ENCODE measurements at regions of chr19 and their contacts with region 1.

Region 1: GRCh38 chr19:32971715-32972540 is at the starts of genes CEP89 and FAAP24:
- DNase-seq: peak; percentile 94
- ATAC-seq: peak; percentile 98
- H3K4me3 Mint-ChIP-seq: peak within 1 kb of the TSS; percentile 99
- H3K27ac Mint-ChIP-seq: peak within 1 kb of the TSS; percentile 97
- H3K4me1 Mint-ChIP-seq: peaks cover 15% of the 10 kb centered on the region
- H3K27me3 Mint-ChIP-seq: no peaks in the 10 kb centered on the region
- CTCF ChIP-seq: no peak
- total RNA-seq, gene CEP89: 16.4 and 19.4 TPM in 2 replicates
- total RNA-seq, gene FAAP24: 3.7 and 4.3 TPM in 2 replicates

Region 2: GRCh38 chr19:32405431-32406161 is 566.3 kb before region 1 on chr19 and contains the start of gene DPY19L3:
- CTCF ChIA-PET with region 1: no interaction called
- POLR2A ChIA-PET with region 1: interaction called, 5 read pairs
- intact Hi-C with region 1: loop called (anchors 5 kb)
- DNase-seq: peak; percentile 93
- ATAC-seq: peak; percentile 91
- H3K4me3 Mint-ChIP-seq: peak within 1 kb of the TSS; percentile 91
- H3K27ac Mint-ChIP-seq: peak within 1 kb of the TSS; percentile 93
- H3K4me1 Mint-ChIP-seq: peaks cover 16% of the 10 kb centered on the region
- H3K27me3 Mint-ChIP-seq: no peaks in the 10 kb centered on the region
- CTCF ChIP-seq: no peak
- total RNA-seq, gene DPY19L3: 22.1 and 29.8 TPM in 2 replicates

Region 3: DNA sequence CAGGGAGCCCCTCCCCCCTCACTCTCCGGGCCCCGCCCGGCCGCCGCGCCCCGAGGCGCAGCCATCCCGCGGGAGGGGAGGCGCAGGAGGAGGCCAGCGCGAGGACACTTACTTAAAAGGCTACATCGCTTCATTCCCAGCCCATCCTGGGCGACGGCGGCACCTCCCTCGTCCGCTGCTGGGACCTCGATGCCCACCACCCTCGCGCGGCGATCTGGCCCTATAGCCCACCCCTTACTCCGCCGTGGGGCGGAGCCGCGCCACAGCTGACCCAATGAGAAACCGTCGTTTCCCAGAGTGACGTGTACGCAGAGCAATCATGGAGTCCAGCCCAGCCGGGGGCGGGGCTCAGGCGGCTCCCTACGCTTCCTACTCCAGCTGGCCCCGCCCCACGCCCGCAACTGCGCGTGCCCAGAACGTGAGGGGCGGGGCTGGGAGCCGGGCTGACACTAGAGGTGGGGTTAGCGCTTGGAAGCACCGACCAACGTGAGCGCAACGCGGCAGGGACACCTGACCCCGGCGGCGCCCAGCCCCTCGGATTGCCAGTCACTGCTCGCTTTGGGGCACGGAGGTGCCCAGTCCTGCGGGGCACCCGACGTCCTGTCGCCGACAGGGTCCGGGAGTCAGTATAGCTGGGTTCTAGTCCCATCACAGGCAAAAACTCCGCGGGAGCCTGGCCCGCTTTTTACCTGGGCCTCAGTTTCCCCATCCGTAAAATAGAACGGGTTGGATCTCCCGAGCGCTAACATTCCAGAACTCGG is 296.8 kb before region 1 on chr19 and contains the start of gene ANKRD27:
- CTCF ChIA-PET with region 1: no interaction called
- POLR2A ChIA-PET with region 1: no interaction called
- intact Hi-C with region 1: loop called (anchors 1 kb)
- DNase-seq: peak; percentile 99
- ATAC-seq: peak; percentile 96
- H3K4me3 Mint-ChIP-seq: peak within 1 kb of the TSS; percentile 91
- H3K27ac Mint-ChIP-seq: peak within 1 kb of the TSS; percentile 84
- H3K4me1 Mint-ChIP-seq: peaks cover 27% of the 10 kb centered on the region
- H3K27me3 Mint-ChIP-seq: peaks cover 10% of the 10 kb centered on the region
- CTCF ChIP-seq: no peak
- total RNA-seq, gene ANKRD27: 33.1 and 44.7 TPM in 2 replicates

Region 4: GRCh38 chr19:33064792-33065550 is 93.0 kb after region 1 on chr19 and contains the start of gene RHPN2:
- CTCF ChIA-PET with region 1: no interaction called
- POLR2A ChIA-PET with region 1: interaction called, 3 read pairs
- intact Hi-C with region 1: loop called (anchors 1 kb)
- DNase-seq: peak; percentile 53
- ATAC-seq: peak; percentile 89
- H3K4me3 Mint-ChIP-seq: peak within 1 kb of the TSS; percentile 76
- H3K27ac Mint-ChIP-seq: no peak within 1 kb of the TSS
- H3K4me1 Mint-ChIP-seq: peaks cover 9% of the 10 kb centered on the region
- H3K27me3 Mint-ChIP-seq: peaks cover 5% of the 10 kb centered on the region
- CTCF ChIP-seq: no peak
- total RNA-seq, gene RHPN2: 1.0 and 1.7 TPM in 2 replicates

Region 5: GRCh38 chr19:33193865-33194362 is 222.0 kb after region 1 on chr19 and contains the start of gene LRP3:
- CTCF ChIA-PET with region 1: no interaction called
- POLR2A ChIA-PET with region 1: no interaction called
- intact Hi-C with region 1: no loop called
- DNase-seq: no peak
- ATAC-seq: no peak
- H3K4me3 Mint-ChIP-seq: peak within 1 kb of the TSS; percentile 11
- H3K27ac Mint-ChIP-seq: no peak within 1 kb of the TSS
- H3K4me1 Mint-ChIP-seq: peaks cover 7% of the 10 kb centered on the region
- H3K27me3 Mint-ChIP-seq: peaks cover 34% of the 10 kb centered on the region
- CTCF ChIP-seq: no peak
- total RNA-seq, gene LRP3: not detected in 2 replicates

Region 6: DNA sequence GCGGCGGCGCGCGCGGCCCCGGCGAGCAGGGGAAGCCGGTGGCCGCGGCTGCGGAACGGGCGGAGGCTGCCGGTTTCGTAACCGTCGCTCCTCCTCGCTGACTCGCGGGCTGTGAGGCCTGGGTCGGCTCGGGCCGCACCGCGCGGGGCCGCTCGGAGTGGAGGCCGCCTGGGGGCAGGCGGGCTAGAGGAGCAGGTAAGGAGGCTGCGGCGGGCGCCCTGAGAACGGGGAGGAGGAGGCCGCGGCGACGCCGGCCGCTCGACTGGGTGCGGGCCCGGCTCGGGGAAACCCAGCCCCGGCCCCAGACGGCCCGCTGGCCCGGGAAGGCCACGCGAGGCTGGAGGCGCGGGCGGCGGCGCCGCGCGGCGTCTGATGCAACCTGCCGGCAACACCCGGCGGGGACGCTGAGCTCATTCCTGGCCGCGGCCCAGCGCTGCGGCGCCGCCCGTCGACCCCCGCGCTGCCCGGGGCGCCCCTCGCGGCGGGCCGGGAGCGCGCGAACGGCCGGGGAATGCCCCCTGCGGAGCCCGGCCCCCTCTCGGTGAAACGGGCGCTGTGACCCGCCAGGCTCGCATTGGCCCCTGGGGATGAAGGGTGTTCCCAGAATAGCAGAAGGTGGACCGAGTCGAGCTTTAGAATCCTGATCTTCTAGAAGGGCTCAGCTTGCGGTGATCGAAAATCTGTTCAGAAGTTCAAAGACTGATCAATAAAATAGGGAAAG is 401.9 kb after region 1 on chr19 and contains the start of gene CEBPG:
- CTCF ChIA-PET with region 1: no interaction called
- POLR2A ChIA-PET with region 1: no interaction called
- intact Hi-C with region 1: loop called (anchors 5 kb)
- DNase-seq: no peak
- ATAC-seq: peak; percentile 34
- H3K4me3 Mint-ChIP-seq: peak within 1 kb of the TSS; percentile 86
- H3K27ac Mint-ChIP-seq: peak within 1 kb of the TSS; percentile 93
- H3K4me1 Mint-ChIP-seq: peaks cover 52% of the 10 kb centered on the region
- H3K27me3 Mint-ChIP-seq: no peaks in the 10 kb centered on the region
- CTCF ChIP-seq: no peak
- total RNA-seq, gene CEBPG: 30.6 and 32.0 TPM in 2 replicates

Measured in activated B cell treated with CpG ODN at 0.5 μM for 24 hours (primary cell).